Heart left ventricle (tissue), 16 donors: ENCODE measurements at regions of chr5 and their contacts with region 1.

Region 1: GRCh38 chr5:159915904-159916840 is at the start of gene ADRA1B:
- DNase-seq: peak; percentile 71 to 87 (median 73)
- ATAC-seq: peak; percentile 45 to 91 (median 88)
- H3K4me3 ChIP-seq: peak within 1 kb of the TSS; percentile 19 to 71 (median 55)
- H3K27ac ChIP-seq: peak within 1 kb of the TSS in 11 of 12 donors; percentile 20 to 82 (median 64)
- H3K4me1 ChIP-seq: peaks cover 0 to 44% (median 3%) of the 10 kb centered on the region in 12 donors
- H3K27me3 ChIP-seq: peaks cover 0 to 37% (median 0%) of the 10 kb centered on the region in 9 donors
- CTCF ChIP-seq: peak in 11 of 12 donors; percentile 43 to 74 (median 62)
- POLR2A ChIP-seq: no peak
- total RNA-seq, gene ADRA1B: 1.1 to 5.4 (median 2.3) TPM

Region 2: GRCh38 chr5:159331093-159331973 is 584.8 kb before region 1 on chr5:
- intact Hi-C with region 1: loop called in 1 of 10 experiments (anchors 5 kb)
- DNase-seq: peak; percentile 64 to 85 (median 71)
- ATAC-seq: peak; percentile 52 to 95 (median 89)
- H3K4me3 ChIP-seq: peak overlapping the region in 11 of 12 donors; percentile 32 to 60 (median 54)
- H3K27ac ChIP-seq: peak overlapping the region in 7 of 12 donors; percentile 14 to 57 (median 28)
- H3K4me1 ChIP-seq: peaks cover 0 to 15% (median 6%) of the 10 kb centered on the region in 12 donors
- H3K27me3 ChIP-seq: peaks cover 0 to 12% (median 0%) of the 10 kb centered on the region in 9 donors
- CTCF ChIP-seq: peak; percentile 58 to 80 (median 73)
- POLR2A ChIP-seq: no peak

Region 3: DNA sequence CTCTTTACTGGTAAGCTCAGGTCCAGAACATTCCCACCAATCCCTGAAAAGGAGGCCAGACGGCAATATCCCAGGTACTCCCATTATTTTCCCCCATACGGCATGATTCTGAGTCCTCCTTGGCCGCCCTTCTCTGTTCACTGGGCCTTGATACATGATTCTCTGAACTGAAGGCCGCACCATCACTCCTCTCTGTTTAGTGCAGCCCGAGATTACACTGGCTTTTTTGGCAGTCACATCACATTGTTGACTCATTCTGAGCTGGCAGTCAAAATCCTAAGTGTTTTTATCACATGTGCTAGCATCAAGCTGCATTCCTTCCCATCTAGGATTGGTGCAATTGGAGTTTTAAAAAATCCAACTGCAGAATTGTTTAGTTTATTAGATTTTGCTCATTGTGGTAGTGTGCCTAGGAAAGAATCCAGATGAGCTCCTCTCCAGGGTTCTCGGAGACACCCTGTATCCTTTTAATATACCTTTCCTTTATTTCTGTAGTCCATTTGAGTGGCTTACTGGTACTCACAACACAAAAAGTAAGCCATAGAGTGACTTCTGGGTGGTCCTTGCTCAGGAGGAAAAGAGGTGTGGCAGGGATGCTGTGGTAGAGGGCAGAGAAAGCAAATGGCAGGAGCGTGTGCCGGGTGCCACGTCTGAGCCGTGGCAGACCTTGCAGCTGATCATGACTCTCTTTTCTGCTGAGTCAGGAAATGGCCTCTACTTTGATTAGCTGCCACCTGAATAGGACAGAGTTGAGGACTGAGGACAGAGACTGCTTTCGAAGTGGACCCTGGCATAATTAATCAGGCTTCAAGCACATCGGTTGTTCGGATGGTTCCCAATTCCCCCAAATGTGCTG is 464.7 kb before region 1 on chr5:
- intact Hi-C with region 1: loop called in 5 of 10 experiments (anchors 5 to 10 kb)
- DNase-seq: peak in 4 of 5 donors; percentile 62 to 70 (median 67)
- ATAC-seq: peak; percentile 95 to 98 (median 96)
- H3K4me3 ChIP-seq: no peak overlapping the region
- H3K27ac ChIP-seq: peak overlapping the region in 11 of 12 donors; percentile 52 to 95 (median 82)
- H3K4me1 ChIP-seq: peaks cover 0 to 18% (median 11%) of the 10 kb centered on the region in 12 donors
- H3K27me3 ChIP-seq: no peaks in the 10 kb centered on the region
- CTCF ChIP-seq: no peak
- POLR2A ChIP-seq: no peak

Region 4: DNA sequence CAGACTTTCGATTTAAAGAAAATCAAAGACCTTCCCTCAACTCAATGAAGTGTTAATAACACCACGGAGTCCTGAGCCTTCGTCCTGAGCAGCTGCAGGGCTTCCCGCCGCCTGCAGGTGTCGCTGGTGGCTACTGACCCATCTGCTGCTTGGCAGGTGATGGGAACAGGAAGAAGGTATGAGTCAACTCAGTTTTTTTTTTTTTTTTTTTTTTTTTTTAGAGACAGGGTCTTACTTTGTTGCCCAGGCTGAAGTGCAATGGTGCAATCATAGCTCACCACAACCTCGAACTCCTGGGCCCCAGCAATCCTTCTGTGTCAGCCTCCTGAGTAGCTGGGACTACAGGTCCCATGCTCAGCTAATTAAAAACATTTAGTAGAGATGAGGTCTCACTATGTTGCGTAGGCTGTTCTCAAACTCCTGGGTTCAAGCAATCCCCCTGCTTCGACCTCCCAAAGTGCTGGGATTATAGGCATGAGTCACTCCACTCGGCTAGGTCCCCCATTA is 400.2 kb before region 1 on chr5:
- intact Hi-C with region 1: loop called in 8 of 10 experiments (anchors 5 to 10 kb)
- DNase-seq: peak in 3 of 5 donors; percentile 27 to 55 (median 39)
- ATAC-seq: peak; percentile 46 to 87 (median 70)
- H3K4me3 ChIP-seq: no peak overlapping the region
- H3K27ac ChIP-seq: no peak overlapping the region
- H3K4me1 ChIP-seq: peaks cover 0 to 8% (median 0%) of the 10 kb centered on the region in 12 donors
- H3K27me3 ChIP-seq: no peaks in the 10 kb centered on the region
- CTCF ChIP-seq: peak; percentile 49 to 72 (median 65)
- POLR2A ChIP-seq: no peak

Region 5: GRCh38 chr5:159638954-159639559 is 277.1 kb before region 1 on chr5:
- intact Hi-C with region 1: loop called in 1 of 10 experiments (anchors 10 kb)
- DNase-seq: no peak
- ATAC-seq: no peak
- H3K4me3 ChIP-seq: no peak overlapping the region
- H3K27ac ChIP-seq: no peak overlapping the region
- H3K4me1 ChIP-seq: peaks cover 0 to 13% (median 0%) of the 10 kb centered on the region in 12 donors
- H3K27me3 ChIP-seq: no peaks in the 10 kb centered on the region
- CTCF ChIP-seq: no peak
- POLR2A ChIP-seq: no peak

Region 6: GRCh38 chr5:159732220-159732619 is 184.0 kb before region 1 on chr5:
- intact Hi-C with region 1: no loop called
- DNase-seq: no peak
- ATAC-seq: no peak
- H3K4me3 ChIP-seq: no peak overlapping the region
- H3K27ac ChIP-seq: no peak overlapping the region
- H3K4me1 ChIP-seq: peaks cover 0 to 8% (median 0%) of the 10 kb centered on the region in 12 donors
- H3K27me3 ChIP-seq: peaks cover 0 to 4% (median 0%) of the 10 kb centered on the region in 9 donors
- CTCF ChIP-seq: no peak
- POLR2A ChIP-seq: no peak

Region 7: GRCh38 chr5:159965031-159965837 is 49.1 kb after region 1 on chr5:
- intact Hi-C with region 1: loop called in 1 of 10 experiments (anchors 1 kb)
- DNase-seq: peak in 4 of 5 donors; percentile 35 to 65 (median 54)
- ATAC-seq: peak; percentile 69 to 85 (median 77)
- H3K4me3 ChIP-seq: no peak overlapping the region
- H3K27ac ChIP-seq: no peak overlapping the region
- H3K4me1 ChIP-seq: peaks cover 0 to 4% (median 0%) of the 10 kb centered on the region in 12 donors
- H3K27me3 ChIP-seq: peaks cover 0 to 24% (median 2%) of the 10 kb centered on the region in 9 donors
- CTCF ChIP-seq: peak; percentile 38 to 79 (median 63)
- POLR2A ChIP-seq: no peak

Region 8: DNA sequence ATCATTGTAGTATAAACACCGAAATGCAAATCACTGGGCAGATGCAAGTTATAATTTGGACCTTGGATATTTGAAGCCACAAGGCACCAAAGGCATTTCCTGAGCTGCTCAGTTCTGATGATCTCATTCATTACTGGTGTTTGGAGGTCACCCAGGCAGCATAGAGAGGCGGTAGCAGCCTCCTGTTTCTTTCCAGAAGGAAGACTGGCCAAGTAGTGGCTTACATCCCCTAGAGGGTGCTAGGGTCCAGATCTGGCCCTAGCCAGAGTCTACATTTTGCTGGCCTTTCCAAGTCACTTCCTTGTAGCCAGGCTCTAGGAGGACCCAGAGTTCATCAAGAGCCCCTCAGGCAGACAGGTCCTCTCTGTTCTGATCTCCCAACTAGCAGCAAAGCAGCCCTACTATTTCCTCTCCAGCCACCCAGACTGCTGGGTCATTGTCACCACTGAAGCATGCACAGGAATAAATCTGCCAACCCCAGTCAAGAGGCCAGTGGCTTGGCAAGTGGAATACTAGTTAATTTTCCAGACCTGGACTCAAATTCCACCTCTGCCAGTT is 59.4 kb after region 1 on chr5:
- intact Hi-C with region 1: no loop called
- DNase-seq: peak in 4 of 5 donors; percentile 22 to 37 (median 34)
- ATAC-seq: peak; percentile 44 to 89 (median 87)
- H3K4me3 ChIP-seq: no peak overlapping the region
- H3K27ac ChIP-seq: peak overlapping the region in 5 of 12 donors; percentile 9 to 41 (median 24)
- H3K4me1 ChIP-seq: peaks cover 0 to 13% (median 9%) of the 10 kb centered on the region in 12 donors
- H3K27me3 ChIP-seq: peaks cover 0 to 36% (median 17%) of the 10 kb centered on the region in 9 donors
- CTCF ChIP-seq: peak in 4 of 12 donors; percentile 11 to 51 (median 25)
- POLR2A ChIP-seq: no peak